ENCODE measurements at regions of chr16 and their contacts with region 1.

Region 1: GRCh38 chr16:29909391-29909790 is 9.1 kb downstream of the ASPHD1 start:
- DNase-seq: no peak
- ATAC-seq: no peak
- H3K4me3 ChIP-seq: no peak overlapping the region
- H3K27ac ChIP-seq: no peak overlapping the region
- H3K4me1 ChIP-seq: no peaks in the 10 kb centered on the region
- H3K27me3 ChIP-seq: no peaks in the 10 kb centered on the region
- CTCF ChIP-seq: no peak

Region 2: GRCh38 chr16:28846080-28846932 is 1063.1 kb before region 1 on chr16 and contains the start of gene TUFM:
- CTCF ChIA-PET with region 1: interaction called, 14 read pairs
- POLR2A ChIA-PET with region 1: no interaction called
- in situ Hi-C with region 1: no loop called
- intact Hi-C with region 1: no loop called
- DNase-seq: peak; percentile 79
- ATAC-seq: peak; percentile 98
- H3K4me3 ChIP-seq: peak within 1 kb of the TSS; percentile 94 to 97
- H3K27ac ChIP-seq: peak within 1 kb of the TSS; percentile 87
- H3K4me1 ChIP-seq: peaks cover 6% of the 10 kb centered on the region; the same call in 1 of the 2 replicates
- H3K27me3 ChIP-seq: no peaks in the 10 kb centered on the region
- CTCF ChIP-seq: peak; percentile 88; the same call in 1 of the 2 replicates
- total RNA-seq, gene TUFM: 231 TPM

Region 3: GRCh38 chr16:29857133-29857760 is 52.1 kb before region 1 on chr16:
- CTCF ChIA-PET with region 1: no interaction called
- POLR2A ChIA-PET with region 1: interaction called, 11 read pairs
- in situ Hi-C with region 1: no loop called
- intact Hi-C with region 1: no loop called
- DNase-seq: no peak
- ATAC-seq: no peak
- H3K4me3 ChIP-seq: no peak overlapping the region
- H3K27ac ChIP-seq: no peak overlapping the region
- H3K4me1 ChIP-seq: no peaks in the 10 kb centered on the region
- H3K27me3 ChIP-seq: no peaks in the 10 kb centered on the region
- CTCF ChIP-seq: no peak

Region 4: DNA sequence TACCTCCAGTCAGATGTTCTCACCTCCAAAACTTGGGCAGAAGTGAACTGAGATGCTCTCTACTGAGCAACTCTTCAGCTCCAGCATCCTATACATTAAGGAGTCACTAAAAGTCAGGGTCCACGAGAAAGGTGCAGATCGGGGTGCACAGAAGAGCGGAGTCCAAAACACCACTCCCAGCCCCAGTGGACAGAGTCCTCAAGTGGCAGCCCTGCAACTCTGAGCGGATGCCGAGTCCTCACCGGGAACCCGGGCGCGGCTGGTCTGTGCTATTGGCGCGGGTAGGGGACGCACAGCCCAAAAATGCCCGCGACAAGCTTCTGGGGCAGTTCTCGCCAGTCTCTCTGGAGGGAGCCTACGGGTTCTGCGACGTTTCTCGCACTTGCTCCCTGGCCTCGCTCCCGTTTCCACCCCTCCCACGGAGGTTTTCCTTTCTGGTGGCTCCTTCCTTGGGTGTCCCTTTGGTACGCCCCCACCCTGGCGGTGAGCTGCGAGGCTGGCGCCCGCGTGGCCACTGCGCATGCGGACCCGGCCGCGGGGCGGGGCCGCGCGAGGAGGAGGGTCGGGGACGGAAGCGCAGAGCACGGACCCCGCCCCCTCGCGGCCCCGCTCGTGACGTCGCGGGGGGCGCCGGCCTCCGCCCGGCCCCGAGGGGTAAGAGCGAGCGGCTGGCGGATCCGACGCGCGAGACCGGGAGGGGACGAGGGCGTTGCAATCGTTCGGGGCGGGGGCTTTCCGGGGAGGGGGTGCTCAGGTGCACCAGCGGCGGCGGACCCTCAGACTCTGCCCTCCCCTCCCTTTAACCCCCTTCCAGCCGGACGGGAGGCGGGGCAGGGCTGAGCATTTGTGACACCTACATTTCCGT is 52.3 kb after region 1 on chr16 and contains the start of gene TMEM219:
- CTCF ChIA-PET with region 1: no interaction called
- POLR2A ChIA-PET with region 1: no interaction called
- in situ Hi-C with region 1: no loop called
- intact Hi-C with region 1: no loop called
- DNase-seq: peak; percentile 64
- ATAC-seq: peak; percentile 97
- H3K4me3 ChIP-seq: peak within 1 kb of the TSS; percentile 69 to 72
- H3K27ac ChIP-seq: peak within 1 kb of the TSS; percentile 94
- H3K4me1 ChIP-seq: peaks cover 15% of the 10 kb centered on the region
- H3K27me3 ChIP-seq: no peaks in the 10 kb centered on the region
- CTCF ChIP-seq: no peak
- total RNA-seq, gene TMEM219: 161 TPM